ENCODE measurements at regions of chr1 and their contacts with region 1.

Region 1: GRCh38 chr1:15788624-15789301 is 18.7 kb downstream of the UQCRHL start:
- DNase-seq: no peak
- H3K4me3 ChIP-seq: no peak overlapping the region
- H3K27me3 ChIP-seq: no peaks in the 10 kb centered on the region
- CTCF ChIP-seq: no peak

Region 2: GRCh38 chr1:15610167-15610566 is 178.6 kb before region 1 on chr1:
- CTCF ChIA-PET with region 1: no interaction called
- POLR2A ChIA-PET with region 1: no interaction called
- DNase-seq: no peak
- H3K4me3 ChIP-seq: no peak overlapping the region
- H3K27me3 ChIP-seq: no peaks in the 10 kb centered on the region
- CTCF ChIP-seq: no peak

Region 3: DNA sequence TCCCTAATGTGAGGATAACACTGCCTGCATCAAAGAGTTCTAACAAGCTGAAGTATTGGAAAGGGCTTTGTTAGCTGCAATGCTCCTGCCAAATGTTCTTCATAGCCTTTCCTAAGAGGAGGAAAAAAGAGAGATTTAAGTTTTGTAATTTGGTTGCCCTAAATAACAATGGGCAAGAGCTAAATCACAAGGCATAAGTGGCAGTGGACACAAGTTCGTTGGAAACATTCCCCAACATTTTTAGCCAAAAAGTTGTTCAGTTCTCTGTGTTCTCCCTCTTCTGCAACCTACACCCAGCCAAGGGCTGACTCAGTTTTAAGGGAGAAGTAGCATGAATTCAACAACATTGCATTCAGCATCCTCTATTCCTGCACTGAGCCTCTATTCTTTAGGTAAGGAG is 21.3 kb after region 1 on chr1:
- CTCF ChIA-PET with region 1: interaction called, 18 read pairs
- POLR2A ChIA-PET with region 1: no interaction called
- DNase-seq: no peak
- H3K4me3 ChIP-seq: no peak overlapping the region
- H3K27me3 ChIP-seq: no peaks in the 10 kb centered on the region
- CTCF ChIP-seq: no peak

Measured in BJ (cell line).